MCF 10A (cell line): ENCODE measurements at regions of chr12 and their contacts with region 1.

Region 1: DNA sequence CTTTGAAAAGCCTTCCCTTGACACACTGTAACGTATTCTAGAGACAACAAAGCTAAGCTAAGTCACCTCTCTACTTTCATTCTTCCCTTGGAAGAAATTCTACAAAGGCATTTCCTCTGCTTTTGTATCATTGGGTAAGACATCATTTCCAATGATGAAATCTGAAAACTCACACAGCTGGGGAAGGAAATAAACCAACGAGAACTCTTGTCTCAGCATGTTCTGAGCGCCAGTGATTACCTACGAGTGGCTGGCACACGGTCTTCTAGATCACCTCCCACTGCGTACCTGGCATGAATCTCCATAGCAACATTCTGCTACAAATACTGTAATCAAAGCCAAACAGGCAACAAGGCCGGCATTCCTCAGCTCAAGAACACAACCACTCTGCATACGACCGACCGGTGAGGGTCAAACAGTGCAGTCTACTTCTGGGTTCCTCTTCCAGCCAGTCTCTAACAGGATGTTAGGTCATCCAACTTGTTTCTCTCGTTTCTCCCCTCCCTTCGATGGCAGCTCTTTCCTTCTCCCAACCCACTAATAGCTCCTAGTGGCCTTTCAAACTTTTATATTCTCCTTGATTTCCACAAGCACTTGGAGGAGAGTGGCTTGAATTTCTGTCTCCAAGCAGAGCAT is 7.6 kb downstream of the VPS37B start:
- DNase-seq: peak; percentile 98
- H3K4me3 Mint-ChIP-seq: peak overlapping the region; percentile 56
- H3K27ac Mint-ChIP-seq: peak overlapping the region; percentile 99
- H3K4me1 Mint-ChIP-seq: peaks cover 49% of the 10 kb centered on the region
- H3K27me3 Mint-ChIP-seq: no peaks in the 10 kb centered on the region
- CTCF ChIP-seq: no peak

Region 2: DNA sequence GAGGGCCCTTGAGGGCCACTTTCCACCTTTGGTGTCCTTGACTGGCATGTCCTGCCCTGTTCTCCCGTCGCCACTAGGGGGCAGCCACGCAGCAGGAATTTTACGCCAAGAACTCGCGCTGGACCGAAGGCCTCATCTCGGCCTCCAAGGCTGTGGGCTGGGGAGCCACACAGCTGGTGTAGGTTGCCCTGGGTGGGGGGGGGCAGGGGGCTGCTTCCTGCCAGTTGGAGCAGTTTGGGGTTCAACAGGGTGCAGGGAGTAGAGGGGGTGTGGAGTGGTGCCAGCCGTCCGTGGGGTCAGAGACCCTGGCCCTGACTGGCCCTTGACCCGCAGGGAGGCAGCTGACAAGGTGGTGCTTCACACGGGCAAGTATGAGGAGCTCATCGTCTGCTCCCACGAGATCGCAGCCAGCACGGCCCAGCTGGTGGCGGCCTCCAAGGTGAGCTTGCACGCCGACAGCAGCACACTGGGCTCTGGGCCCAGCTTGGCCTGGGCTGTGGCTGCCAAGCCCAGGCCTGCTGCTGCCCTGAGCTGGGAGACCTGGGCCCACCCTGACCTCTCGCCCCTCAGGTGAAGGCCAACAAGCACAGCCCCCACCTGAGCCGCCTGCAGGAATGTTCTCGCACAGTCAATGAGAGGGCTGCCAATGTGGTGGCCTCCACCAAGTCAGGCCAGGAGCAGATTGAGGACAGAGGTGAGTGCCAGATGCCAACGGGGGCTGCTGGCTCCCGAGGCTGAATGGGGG is 27.8 kb before region 1 on chr12:
- CTCF ChIA-PET with region 1: interaction called, 16 read pairs
- POLR2A ChIA-PET with region 1: interaction called, 12 read pairs
- intact Hi-C with region 1: no loop called
- DNase-seq: peak; percentile 79
- H3K4me3 Mint-ChIP-seq: no peak overlapping the region
- H3K27ac Mint-ChIP-seq: no peak overlapping the region
- H3K4me1 Mint-ChIP-seq: peaks cover 6% of the 10 kb centered on the region
- H3K27me3 Mint-ChIP-seq: no peaks in the 10 kb centered on the region
- CTCF ChIP-seq: peak; percentile 85

Region 3: GRCh38 chr12:122871851-122872780 is 16.2 kb before region 1 on chr12:
- CTCF ChIA-PET with region 1: interaction called, 16 read pairs
- POLR2A ChIA-PET with region 1: interaction called, 53 read pairs
- intact Hi-C with region 1: no loop called
- DNase-seq: no peak
- H3K4me3 Mint-ChIP-seq: peak overlapping the region; percentile 54
- H3K27ac Mint-ChIP-seq: peak overlapping the region; percentile 84
- H3K4me1 Mint-ChIP-seq: peaks cover 35% of the 10 kb centered on the region
- H3K27me3 Mint-ChIP-seq: no peaks in the 10 kb centered on the region
- CTCF ChIP-seq: no peak

Region 4: DNA sequence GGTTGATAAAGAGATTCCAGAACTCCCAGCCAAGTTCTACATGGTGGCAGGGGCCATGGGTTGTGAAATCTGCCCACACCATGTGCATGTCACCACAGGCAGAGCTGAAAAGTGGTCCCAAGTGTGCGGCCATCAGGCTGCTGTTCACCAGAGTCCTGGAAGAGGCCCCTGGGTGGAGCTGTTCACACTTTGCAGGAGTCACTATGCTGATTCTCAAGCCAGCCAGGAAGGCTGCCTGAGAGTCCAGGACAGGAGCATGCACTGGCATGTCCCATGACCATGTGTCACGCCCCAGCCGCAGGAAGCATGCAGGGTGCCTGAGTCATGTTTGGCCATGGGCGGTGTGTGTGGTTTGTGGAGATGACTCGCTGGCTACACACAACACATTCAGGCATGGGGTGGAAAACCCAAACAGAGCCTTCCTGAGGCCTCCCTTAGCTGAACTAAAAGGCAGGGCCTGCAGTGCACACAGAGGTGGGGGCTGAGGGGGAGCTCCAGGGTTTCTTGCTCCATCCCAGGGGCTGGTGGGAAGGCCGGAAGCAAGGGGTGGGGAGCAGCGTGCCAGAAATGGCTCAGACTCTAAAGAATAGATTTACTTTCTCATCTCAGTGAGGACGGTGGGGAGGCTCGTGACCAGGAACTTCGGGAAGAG is 58.5 kb after region 1 on chr12:
- CTCF ChIA-PET with region 1: interaction called, 13 read pairs
- POLR2A ChIA-PET with region 1: interaction called, 240 read pairs
- intact Hi-C with region 1: loop called (anchors 1 kb)
- DNase-seq: peak; percentile 100
- H3K4me3 Mint-ChIP-seq: peak overlapping the region; percentile 46
- H3K27ac Mint-ChIP-seq: peak overlapping the region; percentile 93
- H3K4me1 Mint-ChIP-seq: peaks cover 47% of the 10 kb centered on the region
- H3K27me3 Mint-ChIP-seq: no peaks in the 10 kb centered on the region
- CTCF ChIP-seq: peak; percentile 22

Region 5: DNA sequence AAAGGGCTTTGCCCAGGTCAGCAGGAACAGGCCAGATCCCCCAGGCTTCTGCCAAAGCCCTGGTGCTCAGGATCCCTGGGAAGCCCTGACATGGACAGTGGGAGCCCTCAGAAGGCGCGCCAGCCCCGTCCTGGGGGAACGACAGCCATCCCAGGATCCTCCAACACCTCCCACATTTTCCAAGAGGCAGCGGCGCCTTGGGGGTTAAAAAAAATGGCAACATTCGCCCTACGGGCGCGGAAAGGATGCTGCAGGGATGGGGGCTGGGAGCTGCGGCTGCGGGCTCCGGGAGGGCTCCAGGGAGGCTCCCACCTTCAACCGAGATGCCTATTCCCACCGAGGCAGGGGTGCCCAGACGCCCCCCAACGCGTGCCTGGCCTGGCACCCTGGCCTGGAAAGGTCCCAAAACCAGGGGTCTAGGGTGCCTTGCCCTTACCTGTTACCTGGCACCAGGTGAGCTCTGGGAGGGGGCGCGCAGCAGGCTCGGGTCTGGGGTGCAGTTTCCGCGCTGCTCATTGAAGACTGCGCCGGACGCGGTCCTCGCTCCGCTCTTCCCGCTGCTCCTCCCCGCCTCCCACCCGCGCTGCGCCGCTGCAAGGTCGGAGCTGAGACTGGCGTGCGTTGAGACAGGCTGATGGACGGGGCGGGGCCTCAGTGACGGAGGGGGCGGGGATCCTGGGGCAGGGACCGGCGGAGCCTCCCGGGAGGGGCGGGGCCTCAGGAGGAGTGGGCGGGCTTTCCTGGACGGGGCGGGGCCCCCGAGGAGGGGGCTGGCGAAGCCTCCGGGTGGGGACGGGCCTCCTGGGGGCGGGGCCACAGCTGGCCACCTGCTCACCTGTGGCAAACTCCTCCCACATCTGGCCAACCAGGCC is 77.7 kb after region 1 on chr12 and contains the start of gene ABCB9:
- CTCF ChIA-PET with region 1: no interaction called
- POLR2A ChIA-PET with region 1: interaction called, 10 read pairs
- intact Hi-C with region 1: no loop called
- DNase-seq: peak; percentile 92
- H3K4me3 Mint-ChIP-seq: peak within 1 kb of the TSS; percentile 72
- H3K27ac Mint-ChIP-seq: no peak within 1 kb of the TSS
- H3K4me1 Mint-ChIP-seq: no peaks in the 10 kb centered on the region
- H3K27me3 Mint-ChIP-seq: no peaks in the 10 kb centered on the region
- CTCF ChIP-seq: no peak
- total RNA-seq, gene ABCB9: 1.6 and 3.2 TPM in 2 replicates